Activated naive CD4-positive, alpha-beta T cell treated with anti-CD3 and anti-CD28 coated beads for 36 hours (primary cell): ENCODE measurements at regions of chr2 and their contacts with region 1.

Region 1: DNA sequence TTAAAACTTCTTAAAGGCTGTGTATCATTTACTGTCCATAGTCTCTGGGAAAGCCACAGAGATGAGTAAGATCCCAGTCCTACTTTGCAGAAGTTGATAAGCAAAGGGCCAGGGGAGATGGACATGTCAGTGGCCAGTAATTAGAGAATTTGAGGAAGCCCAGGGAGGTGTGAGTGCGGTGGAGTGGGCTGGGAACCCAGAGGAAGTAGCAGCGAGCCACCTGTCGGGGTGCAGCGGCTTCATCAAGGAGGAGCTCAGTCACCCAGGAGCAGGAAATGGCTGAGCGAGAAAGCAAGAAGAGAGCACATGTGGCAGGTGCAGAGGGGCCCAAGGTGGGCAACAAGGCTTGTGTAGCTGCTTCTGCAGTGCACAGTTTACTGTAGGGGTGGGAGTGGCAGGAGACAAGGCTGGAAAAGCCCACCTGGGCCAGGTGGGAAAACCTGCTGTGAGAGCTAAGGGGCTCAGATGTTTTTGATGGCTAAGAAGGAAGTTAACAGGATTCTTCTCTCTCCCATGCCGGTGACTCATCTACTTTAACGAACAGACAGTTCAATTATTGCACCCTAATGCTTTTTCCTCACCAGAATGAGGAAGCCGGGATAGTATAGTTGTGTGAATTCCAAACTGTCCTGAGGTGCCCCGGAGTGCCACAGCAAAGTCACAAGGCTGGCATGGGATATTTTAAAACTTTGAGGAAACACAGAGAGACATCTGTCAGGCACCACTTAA is 34.8 kb upstream of the MGAT5 start:
- DNase-seq: peak; percentile 66
- H3K4me3 Mint-ChIP-seq: peak overlapping the region; percentile 33
- H3K27ac Mint-ChIP-seq: peak overlapping the region; percentile 91
- H3K4me1 Mint-ChIP-seq: peaks cover 60% of the 10 kb centered on the region
- H3K27me3 Mint-ChIP-seq: no peaks in the 10 kb centered on the region

Region 2: DNA sequence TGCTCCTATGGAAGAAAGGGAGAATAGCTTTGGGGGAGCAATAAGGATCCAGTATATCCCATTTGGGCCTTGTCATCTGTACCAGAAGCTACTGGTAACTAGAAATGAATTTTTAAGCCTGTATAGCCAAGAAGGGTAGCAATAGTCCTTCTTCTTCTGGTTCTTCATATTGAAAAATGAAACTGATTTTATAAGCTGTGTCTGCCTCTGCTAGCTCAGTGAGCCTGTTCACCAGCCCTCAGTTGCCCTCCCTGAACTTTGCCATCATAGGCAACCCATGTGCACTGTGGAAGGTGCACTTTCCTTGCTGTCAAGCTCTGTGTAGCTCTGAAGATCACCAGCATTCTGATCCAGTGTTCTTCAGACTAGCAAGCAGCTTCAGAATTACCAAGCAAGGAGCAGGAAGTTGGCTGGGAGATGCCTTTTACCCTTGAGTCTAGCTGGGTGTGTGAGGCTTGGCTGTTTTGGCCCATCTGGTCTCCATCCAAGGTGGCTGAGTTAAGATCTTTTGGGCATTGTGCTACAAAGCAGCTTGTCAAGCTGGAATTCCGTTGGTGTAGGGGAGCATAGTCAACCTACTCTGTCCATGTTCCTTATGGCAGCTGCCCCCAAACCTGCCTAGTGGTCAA is 21.0 kb before region 1 on chr2:
- CTCF ChIA-PET with region 1: interaction called, 10 read pairs
- intact Hi-C with region 1: loop called (anchors 1 kb)
- DNase-seq: no peak
- H3K4me3 Mint-ChIP-seq: peak overlapping the region; percentile 15
- H3K27ac Mint-ChIP-seq: peak overlapping the region; percentile 77
- H3K4me1 Mint-ChIP-seq: peaks cover 64% of the 10 kb centered on the region
- H3K27me3 Mint-ChIP-seq: no peaks in the 10 kb centered on the region

Region 3: DNA sequence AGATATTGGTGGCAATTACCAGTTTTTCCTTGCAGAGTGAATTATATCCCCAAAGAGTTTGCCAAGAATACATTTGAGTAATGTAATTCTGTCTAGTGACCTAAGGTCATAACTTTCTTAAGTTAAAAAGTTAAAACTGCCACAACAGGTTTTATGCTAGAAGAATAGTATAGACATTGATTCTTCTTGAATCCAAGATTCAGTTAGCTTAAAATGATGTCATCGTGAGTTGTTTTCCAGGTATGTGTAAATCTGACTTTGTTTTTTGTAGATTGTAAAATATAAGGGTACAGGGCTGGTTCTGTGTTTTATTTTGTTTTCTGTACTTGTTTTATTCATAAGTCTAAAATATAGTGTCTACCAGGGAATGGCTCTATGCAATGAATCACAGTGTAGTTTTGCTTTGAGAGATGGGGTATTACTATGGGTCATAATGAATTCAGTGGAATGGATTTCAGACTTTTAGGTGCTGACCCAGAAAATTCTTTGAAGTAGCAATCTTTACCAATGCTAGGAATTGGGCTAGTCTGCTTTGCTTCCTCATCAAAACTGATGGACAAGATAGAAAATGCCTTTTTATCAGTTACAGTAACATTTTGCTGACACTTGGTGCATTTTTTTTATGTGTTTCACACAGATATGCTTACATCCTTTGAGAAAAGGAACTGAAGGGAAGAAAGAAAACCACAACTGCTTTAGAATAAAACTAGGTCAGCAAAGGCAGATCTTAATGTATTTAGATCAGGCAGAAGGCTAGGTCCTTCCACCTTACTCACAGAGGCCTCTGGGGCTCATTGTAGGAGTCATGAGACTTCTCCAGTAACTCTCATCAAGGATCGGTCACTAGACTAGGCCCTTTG is 14.0 kb after region 1 on chr2:
- CTCF ChIA-PET with region 1: interaction called, 8 read pairs
- intact Hi-C with region 1: loop called (anchors 1 kb)
- DNase-seq: peak; percentile 47
- H3K4me3 Mint-ChIP-seq: no peak overlapping the region
- H3K27ac Mint-ChIP-seq: peak overlapping the region; percentile 80
- H3K4me1 Mint-ChIP-seq: peaks cover 70% of the 10 kb centered on the region
- H3K27me3 Mint-ChIP-seq: no peaks in the 10 kb centered on the region

Region 4: GRCh38 chr2:134253804-134254203 is 34.7 kb after region 1 on chr2 and contains the start of gene MGAT5:
- CTCF ChIA-PET with region 1: interaction called, 4 read pairs
- intact Hi-C with region 1: loop called (anchors 1 kb)
- DNase-seq: no peak
- H3K4me3 Mint-ChIP-seq: no peak within 1 kb of the TSS
- H3K27ac Mint-ChIP-seq: no peak within 1 kb of the TSS
- H3K4me1 Mint-ChIP-seq: peaks cover 82% of the 10 kb centered on the region
- H3K27me3 Mint-ChIP-seq: peaks cover 2% of the 10 kb centered on the region
- total RNA-seq, gene MGAT5: 11.6 to 13.0 TPM

Region 5: GRCh38 chr2:134301099-134301927 is 82.2 kb after region 1 on chr2:
- CTCF ChIA-PET with region 1: no interaction called
- intact Hi-C with region 1: loop called (anchors 1 kb)
- DNase-seq: no peak
- H3K4me3 Mint-ChIP-seq: peak overlapping the region; percentile 5
- H3K27ac Mint-ChIP-seq: no peak overlapping the region
- H3K4me1 Mint-ChIP-seq: peaks cover 46% of the 10 kb centered on the region
- H3K27me3 Mint-ChIP-seq: no peaks in the 10 kb centered on the region

Region 6: GRCh38 chr2:134668821-134669220 is 449.7 kb after region 1 on chr2:
- CTCF ChIA-PET with region 1: no interaction called
- intact Hi-C with region 1: loop called (anchors 5 kb)
- DNase-seq: peak; percentile 95
- H3K4me3 Mint-ChIP-seq: no peak overlapping the region
- H3K27ac Mint-ChIP-seq: no peak overlapping the region
- H3K4me1 Mint-ChIP-seq: peaks cover 63% of the 10 kb centered on the region
- H3K27me3 Mint-ChIP-seq: peaks cover 29% of the 10 kb centered on the region